ENCODE measurements at regions of chr17 and their contacts with region 1.

Region 1: DNA sequence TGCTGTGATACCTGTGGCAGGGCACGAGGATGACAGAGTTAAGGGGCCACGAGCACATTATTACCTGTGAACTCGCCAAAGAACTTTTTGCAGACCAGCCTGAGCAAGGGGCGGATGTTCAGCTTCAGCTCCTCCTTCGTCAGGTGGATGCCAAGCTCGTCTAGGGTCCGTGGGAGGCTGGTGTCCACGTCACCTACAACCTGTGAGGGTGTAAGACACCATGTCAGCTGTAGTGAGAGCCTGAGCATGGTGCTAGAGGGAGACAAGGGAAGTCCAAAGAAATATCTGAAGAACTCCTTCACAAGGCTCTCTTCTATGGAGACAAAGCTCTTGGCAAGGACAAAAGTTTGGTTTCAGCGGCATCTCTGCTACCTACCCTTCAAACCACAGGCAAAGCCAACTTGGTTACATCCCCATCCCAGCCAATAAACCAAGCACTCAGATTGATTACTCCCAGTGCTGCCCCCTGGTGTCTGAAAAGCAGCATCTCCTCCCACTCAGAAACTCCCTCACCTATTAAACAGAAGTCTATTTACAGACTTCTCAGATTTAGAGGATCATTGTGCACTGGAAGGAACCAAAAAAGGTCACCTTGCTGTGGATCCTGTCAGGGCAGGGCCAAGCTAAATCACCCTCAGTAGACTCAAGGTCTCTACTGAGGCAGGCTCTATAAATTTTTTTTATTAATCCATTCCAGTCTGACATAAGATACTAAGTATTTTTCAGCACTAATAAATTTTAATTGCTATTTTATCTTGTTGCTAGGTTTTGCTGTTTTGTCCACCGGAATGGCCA is 17.4 kb downstream of the HIGD1B start:
- DNase-seq: peak; percentile 69
- H3K4me3 ChIP-seq: no peak overlapping the region
- H3K27ac ChIP-seq: no peak overlapping the region
- H3K4me1 ChIP-seq: no peaks in the 10 kb centered on the region
- H3K27me3 ChIP-seq: no peaks in the 10 kb centered on the region
- CTCF ChIP-seq: peak; percentile 86

Region 2: DNA sequence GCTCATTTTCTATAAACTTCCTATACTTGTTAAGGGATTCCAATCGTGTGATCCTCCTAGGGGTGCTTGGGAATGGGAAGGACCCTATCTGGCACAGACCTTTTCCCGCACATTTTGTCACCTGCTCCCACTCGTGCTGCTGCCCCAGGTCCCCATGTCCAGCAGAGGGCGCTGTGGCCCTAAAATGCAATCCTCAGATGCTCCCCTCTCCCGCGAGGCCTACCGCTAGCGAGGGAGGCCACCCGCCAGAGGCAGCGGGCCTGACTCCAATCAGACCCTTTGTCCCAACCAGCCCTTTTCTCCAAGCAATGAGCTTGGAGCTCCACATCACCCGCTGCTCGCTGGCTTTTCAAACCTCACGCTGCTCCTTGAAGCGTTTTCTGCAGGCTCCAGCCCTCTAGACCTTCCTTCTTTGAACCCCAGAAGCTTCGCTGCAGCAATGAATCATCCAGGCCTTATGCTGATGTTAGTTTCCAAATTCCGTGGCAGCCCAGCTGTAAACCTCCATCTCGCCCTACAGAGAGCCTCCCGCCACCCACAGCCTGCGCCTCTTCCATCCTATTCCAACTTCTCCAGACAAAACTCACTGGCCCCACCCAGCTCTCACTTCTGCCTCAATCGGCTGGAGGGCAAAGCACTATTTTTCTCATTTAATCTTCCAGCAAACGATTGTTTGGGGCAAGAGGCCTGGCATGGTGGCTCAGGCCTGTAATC is 331.4 kb before region 1 on chr17:
- intact Hi-C with region 1: loop called (anchors 10 kb)
- DNase-seq: peak; percentile 86
- H3K4me3 ChIP-seq: no peak overlapping the region
- H3K27ac ChIP-seq: peak overlapping the region; percentile 28
- H3K4me1 ChIP-seq: no peaks in the 10 kb centered on the region
- H3K27me3 ChIP-seq: no peaks in the 10 kb centered on the region
- CTCF ChIP-seq: peak; percentile 96

Region 3: DNA sequence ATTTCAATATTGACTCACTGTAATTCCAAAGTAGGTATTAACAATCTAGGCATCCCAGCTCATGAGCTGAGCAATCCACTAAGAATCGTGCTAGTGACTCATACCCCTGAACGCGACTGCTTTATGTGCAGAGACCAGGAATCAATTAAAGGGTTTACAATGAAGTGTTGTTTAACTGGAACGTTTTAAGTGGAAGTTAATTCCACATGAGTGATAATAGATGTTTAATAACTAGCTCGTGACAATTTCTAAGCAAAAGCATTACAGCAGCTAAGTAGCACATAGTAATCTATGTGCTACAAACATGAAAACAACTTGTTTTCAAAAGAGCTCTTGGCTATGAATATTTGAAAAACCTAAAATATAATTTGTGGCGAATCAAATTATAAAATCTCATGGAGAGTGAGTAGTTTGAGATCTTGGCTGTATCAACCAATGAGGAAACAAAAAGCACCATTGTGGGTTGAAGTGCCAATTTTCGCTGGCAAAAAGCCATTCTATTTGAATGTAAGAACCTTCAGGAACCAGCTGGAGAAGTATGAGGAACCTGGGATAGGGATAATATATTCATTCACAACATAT is 44.3 kb before region 1 on chr17:
- intact Hi-C with region 1: no loop called
- DNase-seq: no peak
- H3K4me3 ChIP-seq: no peak overlapping the region
- H3K27ac ChIP-seq: no peak overlapping the region
- H3K4me1 ChIP-seq: no peaks in the 10 kb centered on the region
- H3K27me3 ChIP-seq: no peaks in the 10 kb centered on the region
- CTCF ChIP-seq: no peak